ENCODE measurements at regions of chr21 and their contacts with region 1.

Region 1: GRCh38 chr21:28745131-28746016 is 247.3 kb downstream of the LTN1 start:
- DNase-seq: peak; percentile 74
- H3K4me3 ChIP-seq: peak overlapping the region; percentile 24
- H3K4me3 Mint-ChIP-seq: no peak overlapping the region
- H3K27ac Mint-ChIP-seq: no peak overlapping the region
- H3K4me1 ChIP-seq: no peaks in the 10 kb centered on the region
- H3K4me1 Mint-ChIP-seq: no peaks in the 10 kb centered on the region
- H3K27me3 ChIP-seq: no peaks in the 10 kb centered on the region
- H3K27me3 Mint-ChIP-seq: no peaks in the 10 kb centered on the region
- CTCF ChIP-seq: peak; percentile 76 to 88

Region 2: GRCh38 chr21:26850108-26850643 is 1895.2 kb before region 1 on chr21:
- CTCF ChIA-PET with region 1: no interaction called
- POLR2A ChIA-PET with region 1: no interaction called
- intact Hi-C with region 1: loop called (anchors 1 kb)
- DNase-seq: peak in 1 of 2 experiments; percentile 28
- H3K4me3 ChIP-seq: no peak overlapping the region
- H3K4me3 Mint-ChIP-seq: no peak overlapping the region
- H3K27ac Mint-ChIP-seq: no peak overlapping the region
- H3K4me1 ChIP-seq: no peaks in the 10 kb centered on the region
- H3K4me1 Mint-ChIP-seq: peaks cover 6% of the 10 kb centered on the region
- H3K27me3 ChIP-seq: no peaks in the 10 kb centered on the region
- H3K27me3 Mint-ChIP-seq: no peaks in the 10 kb centered on the region
- CTCF ChIP-seq: peak; percentile 23 to 71

Region 3: GRCh38 chr21:27759091-27759659 is 986.2 kb before region 1 on chr21:
- CTCF ChIA-PET with region 1: interaction called, 12 read pairs
- POLR2A ChIA-PET with region 1: no interaction called
- intact Hi-C with region 1: loop called (anchors 1 kb)
- DNase-seq: peak; percentile 43 to 52
- H3K4me3 ChIP-seq: no peak overlapping the region
- H3K4me3 Mint-ChIP-seq: no peak overlapping the region
- H3K27ac Mint-ChIP-seq: no peak overlapping the region
- H3K4me1 ChIP-seq: 0 out of 2 replicates have a peak, but pooled peaks cover 3% of the 10 kb centered on the region
- H3K4me1 Mint-ChIP-seq: peaks cover 17% of the 10 kb centered on the region
- H3K27me3 ChIP-seq: no peaks in the 10 kb centered on the region
- H3K27me3 Mint-ChIP-seq: peaks cover 5% of the 10 kb centered on the region
- CTCF ChIP-seq: peak in 1 of 2 experiments; percentile 56

Region 4: GRCh38 chr21:28336314-28336713 is 409.1 kb before region 1 on chr21:
- CTCF ChIA-PET with region 1: interaction called, 11 read pairs
- POLR2A ChIA-PET with region 1: no interaction called
- intact Hi-C with region 1: loop called (anchors 1 kb)
- DNase-seq: peak in 1 of 2 experiments; percentile 33
- H3K4me3 ChIP-seq: no peak overlapping the region
- H3K4me3 Mint-ChIP-seq: no peak overlapping the region
- H3K27ac Mint-ChIP-seq: no peak overlapping the region
- H3K4me1 ChIP-seq: peaks cover 21% of the 10 kb centered on the region
- H3K4me1 Mint-ChIP-seq: no peaks in the 10 kb centered on the region
- H3K27me3 ChIP-seq: no peaks in the 10 kb centered on the region
- H3K27me3 Mint-ChIP-seq: no peaks in the 10 kb centered on the region
- CTCF ChIP-seq: peak; percentile 59 to 61

Region 5: GRCh38 chr21:28516991-28517592 is 228.3 kb before region 1 on chr21:
- CTCF ChIA-PET with region 1: interaction called, 38 read pairs
- POLR2A ChIA-PET with region 1: no interaction called
- intact Hi-C with region 1: loop called (anchors 1 kb)
- DNase-seq: peak; percentile 78 to 80
- H3K4me3 ChIP-seq: no peak overlapping the region
- H3K4me3 Mint-ChIP-seq: no peak overlapping the region
- H3K27ac Mint-ChIP-seq: no peak overlapping the region
- H3K4me1 ChIP-seq: no peaks in the 10 kb centered on the region
- H3K4me1 Mint-ChIP-seq: no peaks in the 10 kb centered on the region
- H3K27me3 ChIP-seq: no peaks in the 10 kb centered on the region
- H3K27me3 Mint-ChIP-seq: no peaks in the 10 kb centered on the region
- CTCF ChIP-seq: peak; percentile 48 to 91

Region 6: GRCh38 chr21:28793043-28793442 is 47.7 kb after region 1 on chr21:
- CTCF ChIA-PET with region 1: no interaction called
- POLR2A ChIA-PET with region 1: no interaction called
- intact Hi-C with region 1: loop called (anchors 1 kb)
- DNase-seq: no peak
- H3K4me3 ChIP-seq: no peak overlapping the region
- H3K4me3 Mint-ChIP-seq: no peak overlapping the region
- H3K27ac Mint-ChIP-seq: no peak overlapping the region
- H3K4me1 ChIP-seq: no peaks in the 10 kb centered on the region
- H3K4me1 Mint-ChIP-seq: no peaks in the 10 kb centered on the region
- H3K27me3 ChIP-seq: no peaks in the 10 kb centered on the region
- H3K27me3 Mint-ChIP-seq: peaks cover 3% of the 10 kb centered on the region
- CTCF ChIP-seq: peak; percentile 19 to 27

Region 7: GRCh38 chr21:28856588-28857250 is 111.3 kb after region 1 on chr21:
- CTCF ChIA-PET with region 1: no interaction called
- POLR2A ChIA-PET with region 1: no interaction called
- intact Hi-C with region 1: no loop called
- DNase-seq: no peak
- H3K4me3 ChIP-seq: no peak overlapping the region
- H3K4me3 Mint-ChIP-seq: no peak overlapping the region
- H3K27ac Mint-ChIP-seq: no peak overlapping the region
- H3K4me1 ChIP-seq: no peaks in the 10 kb centered on the region
- H3K4me1 Mint-ChIP-seq: no peaks in the 10 kb centered on the region
- H3K27me3 ChIP-seq: no peaks in the 10 kb centered on the region
- H3K27me3 Mint-ChIP-seq: peaks cover 2% of the 10 kb centered on the region
- CTCF ChIP-seq: no peak

Region 8: GRCh38 chr21:30044445-30045064 is 1299.2 kb after region 1 on chr21:
- CTCF ChIA-PET with region 1: no interaction called
- POLR2A ChIA-PET with region 1: no interaction called
- intact Hi-C with region 1: no loop called
- DNase-seq: peak in 1 of 2 experiments; percentile 29
- H3K4me3 ChIP-seq: no peak overlapping the region
- H3K4me3 Mint-ChIP-seq: no peak overlapping the region
- H3K27ac Mint-ChIP-seq: no peak overlapping the region
- H3K4me1 ChIP-seq: no peaks in the 10 kb centered on the region
- H3K4me1 Mint-ChIP-seq: no peaks in the 10 kb centered on the region
- H3K27me3 ChIP-seq: no peaks in the 10 kb centered on the region
- H3K27me3 Mint-ChIP-seq: peaks cover 2% of the 10 kb centered on the region
- CTCF ChIP-seq: peak; percentile 63 to 69